Left cardiac atrium (tissue), 4 donors: ENCODE measurements at regions of chr20 and their contacts with region 1.

Region 1: DNA sequence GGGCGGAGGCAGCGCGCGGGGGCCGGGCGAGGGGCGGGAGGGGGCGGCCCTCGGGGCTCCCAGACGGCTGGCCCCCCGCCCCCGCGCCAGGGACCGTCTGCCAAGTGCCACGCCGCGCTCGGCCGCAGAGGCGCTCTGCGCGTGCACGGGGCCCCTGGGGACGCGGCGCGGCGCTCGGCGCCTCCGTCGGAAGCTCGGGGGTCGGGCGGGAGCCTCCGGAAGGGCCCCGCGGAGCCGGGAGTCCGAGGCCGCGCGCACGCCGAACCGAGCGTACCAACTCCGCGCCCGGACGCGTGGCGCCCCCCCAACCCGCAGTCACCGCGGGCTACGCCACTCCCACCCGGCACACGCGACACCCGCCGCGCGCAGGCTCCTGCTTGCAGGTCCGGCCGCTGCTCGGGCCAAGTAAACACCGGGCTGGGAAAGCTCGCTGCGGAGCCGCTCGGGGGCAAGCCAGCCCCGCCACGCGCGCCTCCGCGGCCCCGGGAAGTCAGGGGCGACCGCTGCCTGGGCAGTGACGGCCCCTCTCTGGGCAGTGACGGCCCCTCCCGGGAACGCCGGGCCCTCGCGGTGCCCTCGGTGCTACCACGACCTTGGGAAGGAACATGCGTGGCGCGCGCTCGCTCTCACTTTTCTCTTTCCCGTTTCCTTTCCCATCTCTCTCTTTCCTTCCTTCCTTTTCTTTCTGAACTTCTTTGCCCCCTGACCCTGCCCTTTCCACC is 384 bp upstream of the PREX1 start:
- DNase-seq: peak; percentile 87
- ATAC-seq: peak; percentile 66 to 85

Region 2: DNA sequence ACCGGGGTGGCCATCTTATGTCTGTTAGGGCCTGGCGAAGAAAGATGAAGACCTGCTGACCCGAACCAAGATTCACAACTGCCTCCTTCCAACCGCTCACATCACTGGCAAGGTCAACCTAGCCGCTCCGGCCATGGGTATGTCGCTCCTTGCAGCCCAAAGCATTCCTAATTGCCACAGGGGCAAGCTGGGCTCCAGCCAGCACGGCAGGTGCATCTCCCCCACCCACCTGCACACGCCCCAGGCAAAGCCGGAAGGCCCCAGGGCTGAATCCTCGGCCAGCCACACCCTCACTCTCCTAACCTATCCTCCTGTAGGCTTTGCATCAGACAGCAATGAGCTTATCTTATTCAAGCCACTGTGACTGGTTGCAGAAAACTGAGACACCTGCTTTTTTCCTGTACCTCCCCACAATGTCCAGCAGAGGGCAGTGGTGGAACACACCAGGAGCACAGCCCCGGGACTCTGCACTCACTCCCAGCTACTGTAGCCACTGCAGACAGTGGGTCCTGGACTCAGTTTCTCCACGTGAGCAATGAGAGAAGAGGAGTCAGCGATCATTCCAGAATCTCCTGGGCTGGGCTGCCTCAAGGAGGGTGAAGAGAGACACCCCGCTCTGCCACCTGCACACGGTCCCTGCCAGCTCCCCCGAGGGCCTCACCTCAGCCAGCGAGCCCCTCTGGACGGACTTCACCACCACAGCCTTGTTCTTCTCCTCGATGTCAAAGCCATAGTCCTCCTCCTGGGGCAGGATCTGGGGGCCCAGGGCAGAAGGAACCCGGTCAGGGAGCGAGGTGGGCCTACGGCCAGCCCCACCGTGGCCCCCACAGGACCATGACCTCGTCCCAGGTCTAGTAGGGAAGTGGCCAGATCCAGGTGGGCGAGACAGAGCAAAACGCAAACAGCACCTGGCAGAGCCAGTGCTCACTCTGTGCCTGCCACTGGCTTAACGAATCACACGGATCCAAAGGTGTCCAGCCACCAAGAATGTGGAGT is 170.4 kb before region 1 on chr20:
- intact Hi-C with region 1: loop called in 1 of 2 experiments (anchors 5 kb)
- DNase-seq: peak; percentile 66
- ATAC-seq: peak; percentile 82 to 89

Region 3: DNA sequence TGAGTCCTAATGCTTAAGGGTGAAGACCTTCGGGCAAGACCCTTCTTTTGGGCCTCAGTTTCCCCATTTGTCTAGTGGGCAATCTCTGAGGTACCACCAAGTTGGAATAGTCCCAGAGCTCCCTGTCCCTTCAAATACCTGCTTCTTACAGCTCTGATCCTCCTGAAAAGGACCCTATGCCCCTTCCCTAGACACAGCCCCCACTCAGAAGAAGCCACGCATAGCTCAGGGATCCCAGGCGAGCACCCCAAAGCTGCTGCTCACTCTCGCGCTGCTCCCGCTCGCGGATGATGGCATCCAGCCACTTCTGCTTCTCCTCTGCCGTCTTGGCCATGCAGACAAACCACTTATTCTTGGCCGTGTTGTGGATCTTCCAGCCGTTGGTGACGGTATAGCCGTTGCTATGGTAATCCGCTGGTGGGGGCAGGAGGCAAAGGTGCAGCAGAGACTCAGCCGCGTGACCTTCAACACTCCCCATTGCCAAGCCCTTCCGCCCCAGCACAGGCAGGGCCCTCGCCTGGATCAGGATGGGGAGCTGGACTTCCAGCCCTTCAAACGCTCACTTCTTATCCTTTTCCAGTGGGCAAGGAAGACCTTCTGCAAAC is 137.4 kb before region 1 on chr20:
- intact Hi-C with region 1: no loop called
- DNase-seq: no peak
- ATAC-seq: no peak

Region 4: DNA sequence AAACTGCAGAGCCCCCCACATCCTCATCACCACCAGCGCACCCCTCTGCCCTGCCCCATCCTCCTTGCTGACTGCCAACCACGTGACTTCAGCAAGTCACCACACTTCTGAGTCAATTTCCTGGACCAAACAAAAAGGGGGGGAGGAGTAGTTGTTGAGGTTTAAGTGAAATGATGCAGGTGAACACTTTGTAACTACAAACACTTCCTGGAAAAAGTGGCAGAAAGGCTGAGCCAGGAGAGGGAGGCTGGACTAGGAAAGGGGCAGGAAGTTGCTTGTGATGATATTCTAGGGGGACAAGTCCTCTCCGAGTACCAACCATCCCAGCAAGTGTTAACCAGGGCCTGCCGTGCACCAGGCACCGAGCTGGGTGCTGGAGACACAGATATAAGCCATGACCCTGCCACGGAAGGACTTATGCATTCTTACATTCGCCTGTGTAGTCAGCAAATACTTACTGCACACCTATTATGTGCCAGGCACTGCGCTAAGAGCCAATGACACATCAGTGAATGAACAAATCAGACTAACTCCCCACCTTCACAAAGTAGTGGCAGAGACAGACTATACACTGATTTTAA is 67.7 kb before region 1 on chr20:
- intact Hi-C with region 1: loop called in 1 of 2 experiments (anchors 10 kb)
- DNase-seq: no peak
- ATAC-seq: peak; percentile 38 to 61

Region 5: DNA sequence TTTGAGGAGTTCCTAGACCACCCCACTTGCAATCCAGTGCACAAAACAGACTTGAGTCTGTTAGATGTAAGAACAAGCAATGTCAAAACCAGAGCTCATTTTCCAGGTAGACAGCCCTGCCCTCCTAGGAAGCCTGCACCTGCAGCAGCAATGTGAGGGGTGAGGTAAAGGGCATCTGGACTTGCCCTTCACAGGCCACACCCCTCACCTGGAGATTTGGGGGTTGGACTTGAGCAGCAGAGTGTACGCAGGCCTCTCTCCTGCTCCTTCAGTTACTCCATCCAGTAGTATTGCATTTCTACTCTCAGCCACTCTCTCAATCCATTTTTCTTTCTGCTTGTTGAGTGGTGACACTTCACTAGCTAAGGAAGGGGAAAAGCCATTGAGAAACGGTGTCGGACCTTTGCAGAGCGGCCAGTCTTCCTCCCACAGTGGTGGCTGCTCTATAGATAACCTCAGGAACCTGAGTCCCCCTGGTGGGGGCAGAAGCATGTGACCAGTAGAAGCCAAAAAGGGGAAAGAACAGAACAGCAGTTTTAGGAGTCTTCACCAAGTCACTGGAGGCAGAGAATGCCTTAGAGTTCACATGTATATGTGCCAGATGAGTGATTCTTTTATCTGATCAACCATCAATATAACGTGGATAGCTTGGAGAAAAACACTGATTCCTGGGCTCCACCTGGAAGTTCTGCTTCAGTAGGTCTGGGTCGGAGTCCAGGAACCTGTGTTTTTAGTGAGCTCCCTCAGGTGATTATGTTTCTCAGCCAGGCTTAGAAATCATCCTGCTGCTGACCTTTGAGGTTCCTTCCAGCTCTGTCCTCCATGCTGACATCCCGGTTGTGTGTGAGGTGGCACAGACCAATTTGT is 121.4 kb after region 1 on chr20:
- intact Hi-C with region 1: no loop called
- DNase-seq: no peak
- ATAC-seq: no peak